ENCODE measurements at regions of chr14 and their contacts with region 1.

Region 1: GRCh38 chr14:31360919-31361662 is 59.3 kb downstream of the HEATR5A start:
- DNase-seq: no peak
- H3K4me3 ChIP-seq: no peak overlapping the region
- H3K4me3 Mint-ChIP-seq: no peak overlapping the region
- H3K27ac ChIP-seq: no peak overlapping the region
- H3K27ac Mint-ChIP-seq: peak overlapping the region in 1 of 7 donors; percentile 58
- H3K4me1 ChIP-seq: peaks cover 2% of the 10 kb centered on the region
- H3K4me1 Mint-ChIP-seq: no peaks in the 10 kb centered on the region
- H3K27me3 ChIP-seq: no peaks in the 10 kb centered on the region
- H3K27me3 Mint-ChIP-seq: no peaks in the 10 kb centered on the region

Region 2: GRCh38 chr14:30656190-30656632 is 704.9 kb before region 1 on chr14:
- CTCF ChIA-PET with region 1: no interaction called
- POLR2A ChIA-PET with region 1: no interaction called
- intact Hi-C with region 1: loop called (anchors 1 kb)
- DNase-seq: peak in 4 of 5 donors; percentile 21 to 40 (median 30)
- H3K4me3 ChIP-seq: no peak overlapping the region
- H3K4me3 Mint-ChIP-seq: no peak overlapping the region
- H3K27ac ChIP-seq: no peak overlapping the region
- H3K27ac Mint-ChIP-seq: no peak overlapping the region
- H3K4me1 ChIP-seq: no peaks in the 10 kb centered on the region
- H3K4me1 Mint-ChIP-seq: peaks cover 0 to 4% (median 0%) of the 10 kb centered on the region in 4 donors
- H3K27me3 ChIP-seq: no peaks in the 10 kb centered on the region
- H3K27me3 Mint-ChIP-seq: no peaks in the 10 kb centered on the region

Region 3: DNA sequence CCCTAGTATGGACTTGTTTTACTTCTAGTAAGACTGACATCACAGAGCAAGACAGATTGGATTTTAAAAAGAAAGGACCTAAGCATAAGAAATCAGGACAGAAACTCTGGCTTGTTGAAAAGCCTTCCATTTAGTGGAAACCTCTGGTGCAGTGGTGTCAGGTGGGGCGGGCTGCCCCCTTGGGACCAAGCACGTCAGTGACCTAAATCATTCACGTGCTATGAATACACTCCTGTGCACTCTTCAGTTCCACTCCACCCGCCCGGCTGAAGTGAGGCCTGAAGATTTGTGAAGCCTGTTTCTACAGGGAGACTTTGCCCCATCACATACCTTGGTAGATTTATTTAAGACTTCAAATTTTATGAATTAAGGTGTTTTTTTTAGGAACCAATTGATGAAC is 276.7 kb before region 1 on chr14:
- CTCF ChIA-PET with region 1: interaction called, 4 read pairs
- POLR2A ChIA-PET with region 1: no interaction called
- intact Hi-C with region 1: loop called (anchors 1 kb)
- DNase-seq: no peak
- H3K4me3 ChIP-seq: no peak overlapping the region
- H3K4me3 Mint-ChIP-seq: no peak overlapping the region
- H3K27ac ChIP-seq: no peak overlapping the region
- H3K27ac Mint-ChIP-seq: no peak overlapping the region
- H3K4me1 ChIP-seq: no peaks in the 10 kb centered on the region
- H3K4me1 Mint-ChIP-seq: no peaks in the 10 kb centered on the region
- H3K27me3 ChIP-seq: no peaks in the 10 kb centered on the region
- H3K27me3 Mint-ChIP-seq: no peaks in the 10 kb centered on the region

Region 4: GRCh38 chr14:31159682-31160296 is 201.3 kb before region 1 on chr14:
- CTCF ChIA-PET with region 1: no interaction called
- POLR2A ChIA-PET with region 1: no interaction called
- intact Hi-C with region 1: loop called (anchors 10 kb)
- DNase-seq: no peak
- H3K4me3 ChIP-seq: no peak overlapping the region
- H3K4me3 Mint-ChIP-seq: no peak overlapping the region
- H3K27ac ChIP-seq: no peak overlapping the region
- H3K27ac Mint-ChIP-seq: no peak overlapping the region
- H3K4me1 ChIP-seq: no peaks in the 10 kb centered on the region
- H3K4me1 Mint-ChIP-seq: peaks cover 0 to 2% (median 0%) of the 10 kb centered on the region in 4 donors
- H3K27me3 ChIP-seq: no peaks in the 10 kb centered on the region
- H3K27me3 Mint-ChIP-seq: no peaks in the 10 kb centered on the region

Region 5: DNA sequence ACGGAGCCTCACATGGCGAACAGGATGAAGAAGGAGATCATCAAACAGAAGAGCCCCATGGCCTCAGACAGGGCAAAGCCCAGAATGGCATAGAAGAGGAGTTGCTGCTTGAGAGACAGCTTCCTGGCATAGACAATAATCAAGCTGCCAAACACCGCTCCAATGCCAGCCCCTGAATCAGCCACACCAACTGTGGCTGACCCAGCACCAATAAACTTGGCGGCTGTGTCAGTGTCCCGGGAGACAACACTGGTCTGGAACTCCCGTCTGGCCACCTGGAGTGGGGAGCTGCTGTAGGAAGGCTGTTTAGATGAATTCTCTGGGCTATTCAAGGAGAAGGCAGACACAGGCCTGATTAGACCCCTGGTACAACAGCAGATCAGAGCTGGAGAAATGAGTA is 40.9 kb before region 1 on chr14:
- CTCF ChIA-PET with region 1: no interaction called
- POLR2A ChIA-PET with region 1: no interaction called
- intact Hi-C with region 1: no loop called
- DNase-seq: no peak
- H3K4me3 ChIP-seq: no peak overlapping the region
- H3K4me3 Mint-ChIP-seq: no peak overlapping the region
- H3K27ac ChIP-seq: no peak overlapping the region
- H3K27ac Mint-ChIP-seq: peak overlapping the region in 1 of 7 donors; percentile 65
- H3K4me1 ChIP-seq: no peaks in the 10 kb centered on the region
- H3K4me1 Mint-ChIP-seq: no peaks in the 10 kb centered on the region
- H3K27me3 ChIP-seq: no peaks in the 10 kb centered on the region
- H3K27me3 Mint-ChIP-seq: no peaks in the 10 kb centered on the region

Region 6: DNA sequence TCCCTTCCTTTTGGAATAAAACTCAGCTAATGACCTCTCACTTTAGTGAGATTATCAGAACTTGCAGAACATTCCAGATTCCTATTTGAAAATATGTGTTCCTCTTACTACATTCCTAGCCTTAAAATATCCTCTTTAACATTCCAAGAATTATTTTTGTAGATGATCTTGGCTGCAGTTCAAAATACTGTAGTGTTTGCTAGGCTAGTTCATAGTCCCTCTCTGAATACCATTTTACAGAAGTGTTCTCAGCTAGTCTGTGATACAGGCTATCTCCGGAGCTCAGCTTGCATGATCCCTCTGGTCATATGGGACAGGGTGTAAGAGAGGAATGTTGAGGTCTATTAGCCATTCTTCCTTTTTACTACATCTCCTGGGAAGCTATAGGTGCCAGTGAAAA is 144.3 kb after region 1 on chr14:
- CTCF ChIA-PET with region 1: no interaction called
- POLR2A ChIA-PET with region 1: no interaction called
- intact Hi-C with region 1: no loop called
- DNase-seq: no peak
- H3K4me3 ChIP-seq: no peak overlapping the region
- H3K4me3 Mint-ChIP-seq: no peak overlapping the region
- H3K27ac ChIP-seq: no peak overlapping the region
- H3K27ac Mint-ChIP-seq: no peak overlapping the region
- H3K4me1 ChIP-seq: no peaks in the 10 kb centered on the region
- H3K4me1 Mint-ChIP-seq: no peaks in the 10 kb centered on the region
- H3K27me3 ChIP-seq: no peaks in the 10 kb centered on the region
- H3K27me3 Mint-ChIP-seq: peaks cover 0 to 2% of the 10 kb centered on the region in 2 donors

Measured in CD4-positive, alpha-beta memory T cell (primary cell).